Left cardiac atrium (tissue), 4 donors: ENCODE measurements at regions of chr1 and their contacts with region 1.

Region 1: GRCh38 chr1:200279810-200280411 is 129.9 kb downstream of the ZNF281 start:
- DNase-seq: peak; percentile 22
- ATAC-seq: peak in 1 of 2 donors; percentile 45

Region 2: GRCh38 chr1:200488375-200489165 is 208.7 kb after region 1 on chr1:
- intact Hi-C with region 1: loop called in 1 of 2 experiments (anchors 10 kb)
- DNase-seq: no peak
- ATAC-seq: peak; percentile 59 to 74